ENCODE measurements at regions of chr10 and their contacts with region 1.

Region 1: DNA sequence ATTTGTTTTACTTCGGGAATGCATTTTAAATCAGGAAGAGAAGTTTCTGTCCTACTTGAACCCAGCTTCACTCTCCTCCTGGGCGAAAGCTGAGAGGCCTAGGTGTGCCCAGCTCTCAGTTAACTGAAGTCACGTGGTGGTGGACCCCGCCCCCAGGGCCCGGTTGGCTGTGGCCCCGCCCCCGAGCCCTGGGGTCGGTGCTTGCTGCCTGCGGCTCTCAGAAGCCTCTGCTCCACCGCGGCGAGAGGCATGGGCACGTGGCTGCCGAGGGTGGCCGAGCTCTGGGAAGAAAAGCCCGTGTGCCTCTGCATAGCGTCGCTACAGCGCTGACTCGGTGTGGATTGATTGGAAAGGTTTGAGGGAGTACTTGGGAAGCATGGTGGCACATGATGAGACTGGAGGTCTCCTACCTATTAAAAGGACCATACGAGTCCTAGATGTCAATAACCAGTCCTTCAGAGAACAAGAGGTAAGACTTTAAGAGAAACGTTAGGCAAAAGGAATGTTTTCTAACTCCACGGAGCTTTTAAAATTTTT is 34.1 kb downstream of the NET1 start:
- DNase-seq: no peak
- H3K4me3 ChIP-seq: peak overlapping the region; percentile 78
- CTCF ChIP-seq: no peak

Region 2: DNA sequence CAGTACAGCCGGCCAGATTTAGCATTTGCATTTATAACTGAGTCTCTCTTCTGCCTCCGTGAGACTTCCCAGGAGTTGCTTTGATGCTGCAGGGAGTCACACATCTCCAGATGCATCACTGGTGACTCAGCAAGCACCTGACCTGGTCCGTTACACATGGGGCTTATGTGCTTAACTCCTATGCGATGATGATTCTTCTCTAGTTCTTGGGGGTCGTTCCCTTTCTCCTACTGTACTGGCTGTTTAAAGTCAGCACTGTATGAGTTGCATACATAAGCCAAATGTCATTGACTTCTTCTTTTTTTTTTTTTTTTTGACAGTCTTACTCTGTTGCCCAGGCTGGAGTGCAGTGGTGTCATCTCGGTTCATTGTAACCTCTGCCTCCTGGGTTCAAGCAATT is 633.4 kb before region 1 on chr10:
- CTCF ChIA-PET with region 1: interaction called, 10 read pairs
- POLR2A ChIA-PET with region 1: no interaction called
- DNase-seq: peak; percentile 21
- H3K4me3 ChIP-seq: no peak overlapping the region
- CTCF ChIP-seq: no peak

Region 3: GRCh38 chr10:5434017-5434753 is 12.3 kb before region 1 on chr10:
- CTCF ChIA-PET with region 1: interaction called, 83 read pairs
- POLR2A ChIA-PET with region 1: no interaction called
- DNase-seq: peak; percentile 53
- H3K4me3 ChIP-seq: no peak overlapping the region
- CTCF ChIP-seq: peak; percentile 51

Region 4: DNA sequence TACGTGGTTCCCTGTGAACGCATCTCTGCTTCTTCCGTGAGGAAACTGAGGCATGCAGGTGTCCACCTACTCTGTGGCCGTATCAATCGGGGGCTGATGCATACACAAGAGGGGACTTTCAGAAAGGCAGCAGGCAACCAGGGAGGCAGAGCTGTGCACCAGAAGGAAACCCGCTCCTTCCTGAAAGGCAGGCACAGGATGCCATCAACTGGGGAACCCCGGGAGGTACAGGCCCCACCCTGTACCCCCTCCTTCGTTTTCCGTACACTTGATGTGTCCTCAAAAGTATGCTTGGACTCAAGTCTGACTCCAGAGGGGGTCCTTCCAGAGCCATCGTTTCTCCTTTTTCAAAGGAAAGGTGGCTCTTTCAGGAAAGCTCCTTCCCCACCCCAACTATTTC is 160.4 kb after region 1 on chr10:
- CTCF ChIA-PET with region 1: interaction called, 13 read pairs
- POLR2A ChIA-PET with region 1: no interaction called
- DNase-seq: no peak
- H3K4me3 ChIP-seq: no peak overlapping the region
- CTCF ChIP-seq: no peak

Region 5: DNA sequence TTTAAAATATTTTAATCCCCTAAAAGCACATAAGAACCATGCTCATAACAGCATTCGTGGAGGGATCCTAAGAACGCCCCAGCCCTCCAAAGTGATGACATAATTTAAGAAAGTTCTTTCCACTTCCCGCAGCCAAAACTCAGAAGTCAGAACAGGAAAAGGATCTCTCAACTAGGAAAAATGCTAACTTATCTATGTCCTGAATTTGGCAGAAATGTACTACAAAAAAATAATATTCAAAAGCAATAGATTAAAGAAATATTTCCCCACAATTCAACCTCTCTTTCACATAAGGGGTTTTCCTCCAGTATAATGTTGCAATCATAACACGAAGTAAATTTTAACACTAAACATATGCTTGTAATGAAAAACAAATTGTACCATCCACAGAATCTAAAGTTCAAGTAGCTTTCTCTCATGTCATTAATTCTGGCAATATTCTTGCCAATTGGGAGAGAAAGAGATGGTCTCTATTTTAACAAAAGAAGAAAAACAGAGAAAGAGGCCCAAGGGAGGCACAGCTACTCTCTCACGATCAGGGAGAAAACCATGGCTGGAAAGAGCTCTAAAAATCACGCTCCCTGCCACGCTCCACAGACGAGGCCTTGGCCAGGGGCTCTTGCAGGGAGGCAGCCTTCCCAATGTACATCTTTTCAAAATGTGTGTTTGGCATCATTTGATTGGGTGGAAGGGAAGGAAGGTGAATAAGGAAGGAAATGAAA is 197.0 kb after region 1 on chr10:
- CTCF ChIA-PET with region 1: interaction called, 1,068 read pairs
- POLR2A ChIA-PET with region 1: no interaction called
- DNase-seq: no peak
- H3K4me3 ChIP-seq: no peak overlapping the region
- CTCF ChIP-seq: no peak